MCF 10A (cell line): ENCODE measurements at regions of chr4 and their contacts with region 1.

Region 1: DNA sequence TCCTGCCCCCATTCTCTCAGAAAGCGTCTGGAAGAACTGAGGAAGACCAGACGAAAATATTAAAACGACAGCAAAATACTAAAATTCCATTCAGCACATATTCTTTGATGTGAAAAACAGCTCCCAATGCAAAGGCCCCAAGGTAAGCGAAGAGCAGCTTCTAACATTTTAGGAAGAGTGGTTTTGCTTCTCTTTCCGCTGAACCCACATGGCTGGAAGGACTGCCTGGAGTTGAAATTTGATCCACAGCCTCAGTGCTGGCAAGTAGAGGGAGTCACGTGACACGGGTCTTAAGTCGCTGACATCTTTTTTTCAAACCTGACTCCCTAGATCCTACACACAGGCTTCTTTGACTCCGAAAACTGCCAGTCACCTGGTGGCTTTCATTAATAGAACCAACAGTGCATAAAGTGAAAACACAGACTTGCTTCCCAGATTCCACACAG is at the start of gene FAM13A:
- DNase-seq: peak; percentile 96
- H3K4me3 Mint-ChIP-seq: peak within 1 kb of the TSS; percentile 73
- H3K27ac Mint-ChIP-seq: peak within 1 kb of the TSS; percentile 82
- H3K4me1 Mint-ChIP-seq: peaks cover 36% of the 10 kb centered on the region
- H3K27me3 Mint-ChIP-seq: no peaks in the 10 kb centered on the region
- CTCF ChIP-seq: no peak
- total RNA-seq, gene FAM13A: 10.0 and 11.1 TPM in 2 replicates

Region 2: GRCh38 chr4:88809576-88810219 is 247.3 kb before region 1 on chr4:
- CTCF ChIA-PET with region 1: no interaction called
- POLR2A ChIA-PET with region 1: no interaction called
- intact Hi-C with region 1: no loop called
- DNase-seq: no peak
- H3K4me3 Mint-ChIP-seq: no peak overlapping the region
- H3K27ac Mint-ChIP-seq: no peak overlapping the region
- H3K4me1 Mint-ChIP-seq: peaks cover 20% of the 10 kb centered on the region
- H3K27me3 Mint-ChIP-seq: no peaks in the 10 kb centered on the region
- CTCF ChIP-seq: no peak

Region 3: DNA sequence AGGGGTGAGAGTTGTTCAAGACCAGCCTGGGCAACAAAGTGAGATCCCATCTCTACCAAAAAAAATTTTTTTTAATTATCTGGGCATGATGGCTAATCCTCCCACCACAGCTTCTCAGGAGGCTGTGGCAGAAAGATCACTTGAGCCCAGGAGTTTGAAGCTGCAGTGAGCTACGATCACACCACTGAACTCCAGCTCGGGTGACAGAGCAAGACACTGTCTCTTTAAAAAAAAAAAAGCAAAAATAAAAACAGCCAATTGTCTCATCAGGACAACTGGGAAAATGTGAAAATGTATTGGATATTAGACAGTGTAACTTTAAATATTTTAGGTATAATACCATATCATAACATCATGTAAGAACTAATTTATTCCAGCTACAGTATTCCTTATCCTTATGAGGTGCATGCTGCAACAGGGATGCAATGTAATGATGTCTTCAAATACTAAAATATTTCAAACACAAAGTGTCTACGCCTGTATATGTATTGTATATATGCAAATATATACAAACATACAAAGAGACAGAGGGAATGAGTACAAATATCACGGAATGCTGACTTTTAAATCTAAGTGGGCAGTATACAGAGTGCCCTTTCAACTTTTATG is 17.1 kb before region 1 on chr4:
- CTCF ChIA-PET with region 1: interaction called, 3 read pairs
- POLR2A ChIA-PET with region 1: interaction called, 30 read pairs
- intact Hi-C with region 1: no loop called
- DNase-seq: no peak
- H3K4me3 Mint-ChIP-seq: no peak overlapping the region
- H3K27ac Mint-ChIP-seq: peak overlapping the region; percentile 51
- H3K4me1 Mint-ChIP-seq: no peaks in the 10 kb centered on the region
- H3K27me3 Mint-ChIP-seq: no peaks in the 10 kb centered on the region
- CTCF ChIP-seq: no peak

Region 4: GRCh38 chr4:89067417-89067816 is 10.4 kb after region 1 on chr4:
- CTCF ChIA-PET with region 1: interaction called, 5 read pairs
- POLR2A ChIA-PET with region 1: interaction called, 10 read pairs
- intact Hi-C with region 1: no loop called
- DNase-seq: no peak
- H3K4me3 Mint-ChIP-seq: no peak overlapping the region
- H3K27ac Mint-ChIP-seq: no peak overlapping the region
- H3K4me1 Mint-ChIP-seq: no peaks in the 10 kb centered on the region
- H3K27me3 Mint-ChIP-seq: no peaks in the 10 kb centered on the region
- CTCF ChIP-seq: no peak

Region 5: GRCh38 chr4:89110986-89111832 is 54.2 kb after region 1 on chr4 and contains the start of gene TIGD2:
- CTCF ChIA-PET with region 1: interaction called, 3 read pairs
- POLR2A ChIA-PET with region 1: interaction called, 51 read pairs
- intact Hi-C with region 1: loop called (anchors 2 kb)
- DNase-seq: peak; percentile 90
- H3K4me3 Mint-ChIP-seq: peak within 1 kb of the TSS; percentile 79
- H3K27ac Mint-ChIP-seq: peak within 1 kb of the TSS; percentile 61
- H3K4me1 Mint-ChIP-seq: peaks cover 11% of the 10 kb centered on the region
- H3K27me3 Mint-ChIP-seq: no peaks in the 10 kb centered on the region
- CTCF ChIP-seq: peak; percentile 79
- total RNA-seq, gene TIGD2: 15.1 and 15.5 TPM in 2 replicates

Region 6: GRCh38 chr4:89123451-89123851 is 66.5 kb after region 1 on chr4:
- CTCF ChIA-PET with region 1: no interaction called
- POLR2A ChIA-PET with region 1: interaction called, 32 read pairs
- intact Hi-C with region 1: no loop called
- DNase-seq: peak; percentile 56
- H3K4me3 Mint-ChIP-seq: peak overlapping the region; percentile 17
- H3K27ac Mint-ChIP-seq: peak overlapping the region; percentile 93
- H3K4me1 Mint-ChIP-seq: peaks cover 20% of the 10 kb centered on the region
- H3K27me3 Mint-ChIP-seq: no peaks in the 10 kb centered on the region
- CTCF ChIP-seq: no peak